Adrenal gland (tissue), 19 donors: ENCODE measurements at regions of chr14 and their contacts with region 1.

Region 1: DNA sequence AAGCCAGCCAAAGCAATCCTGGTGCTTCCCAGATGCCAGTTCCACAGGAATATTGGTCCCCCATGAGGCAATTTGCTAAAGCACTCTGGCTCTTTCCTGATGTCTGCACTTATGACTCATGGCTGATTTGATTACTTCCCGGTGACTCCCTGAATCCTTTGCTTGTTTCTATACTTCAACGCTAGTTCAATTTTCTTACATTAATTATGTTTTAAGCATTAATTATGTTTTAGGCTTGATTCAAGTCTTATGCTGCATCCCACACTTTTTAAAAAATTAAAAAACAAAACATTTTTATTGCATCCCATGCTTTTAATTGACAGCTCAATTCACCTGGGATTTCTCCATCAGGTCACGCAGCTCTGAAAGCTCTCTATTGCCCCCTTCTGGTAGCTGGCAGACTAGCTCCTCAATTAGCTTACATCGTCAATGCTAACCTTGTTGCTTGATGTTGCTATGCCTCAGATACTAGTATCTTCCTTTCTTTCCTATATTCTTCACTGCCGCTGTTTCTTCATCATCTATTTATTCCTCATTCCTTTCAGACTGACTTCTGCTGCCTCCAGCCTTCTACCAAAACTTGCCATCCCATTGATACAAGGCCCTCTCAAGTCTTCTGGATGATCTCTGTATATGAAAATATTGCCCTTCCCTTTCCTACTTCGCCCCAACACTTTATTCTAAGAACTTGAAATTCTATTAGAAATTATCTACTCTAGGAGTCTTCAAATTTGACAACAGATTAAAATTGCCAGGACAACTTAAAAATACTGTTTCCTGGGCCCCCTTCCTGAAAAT is 32.0 kb downstream of the TSHR start:
- DNase-seq: peak; percentile 54 to 92 (median 69)
- H3K4me3 ChIP-seq: no peak overlapping the region
- H3K27ac ChIP-seq: no peak overlapping the region
- H3K4me1 ChIP-seq: no peaks in the 10 kb centered on the region
- H3K27me3 ChIP-seq: no peaks in the 10 kb centered on the region
- CTCF ChIP-seq: peak; percentile 87 to 96 (median 92)
- POLR2A ChIP-seq: no peak

Region 2: GRCh38 chr14:79766511-79766910 is 1220.9 kb before region 1 on chr14:
- intact Hi-C with region 1: no loop called
- DNase-seq: no peak
- H3K4me3 ChIP-seq: no peak overlapping the region
- H3K27ac ChIP-seq: no peak overlapping the region
- H3K4me1 ChIP-seq: no peaks in the 10 kb centered on the region
- H3K27me3 ChIP-seq: no peaks in the 10 kb centered on the region
- CTCF ChIP-seq: no peak
- POLR2A ChIP-seq: no peak

Region 3: DNA sequence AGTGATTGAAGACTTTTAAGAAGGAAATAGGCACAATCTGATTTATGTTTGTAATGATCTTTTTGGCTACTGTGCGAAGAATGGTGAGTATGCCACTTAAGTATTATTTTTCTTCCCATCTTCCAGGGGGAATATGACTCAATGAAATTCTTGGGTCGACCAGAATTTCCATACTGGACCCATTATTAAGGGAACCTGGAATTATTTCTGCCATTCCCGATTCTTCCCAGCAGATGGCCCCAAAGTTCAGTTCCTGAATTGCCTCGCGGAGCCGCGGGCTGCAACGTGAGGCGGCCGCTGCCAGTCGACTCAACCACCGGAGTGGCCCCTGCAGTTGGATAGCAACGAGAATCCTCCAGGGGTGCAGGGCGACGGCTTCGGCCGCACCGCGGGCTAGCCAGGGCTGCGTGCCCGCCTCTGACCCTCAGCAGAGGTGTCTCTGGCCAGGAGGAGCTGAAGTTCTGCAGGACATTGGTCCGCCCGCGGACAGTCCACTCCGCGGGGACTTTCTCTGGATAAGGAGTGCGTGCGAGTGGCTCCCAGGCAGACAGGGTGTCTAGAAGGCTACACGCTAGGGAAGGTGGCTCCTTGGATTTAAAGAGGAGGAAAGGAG is 32.6 kb before region 1 on chr14:
- intact Hi-C with region 1: loop called (anchors 2 kb)
- DNase-seq: peak; percentile 78 to 93 (median 88)
- H3K4me3 ChIP-seq: peak overlapping the region in 3 of 4 donors; percentile 33 to 63 (median 54)
- H3K27ac ChIP-seq: no peak overlapping the region
- H3K4me1 ChIP-seq: peaks cover 3 to 12% of the 10 kb centered on the region in 2 donors
- H3K27me3 ChIP-seq: no peaks in the 10 kb centered on the region
- CTCF ChIP-seq: peak; percentile 56 to 91 (median 86)
- POLR2A ChIP-seq: no peak